Activated T-helper 1 cell treated with anti-CD3 and anti-CD28 coated beads, Interleukin-12 subunit alpha, Interleukin-12 subunit beta, Interleukin-2, Interleukin-4 antibody, amounts not matched to agents 30 ng/mL and 10 ng/mL and 1 ng/mL, durations not matched to agents 14 hours and 24 hours and 36 hours (primary cell): ENCODE measurements at regions of chr1 and their contacts with region 1.

Region 1: DNA sequence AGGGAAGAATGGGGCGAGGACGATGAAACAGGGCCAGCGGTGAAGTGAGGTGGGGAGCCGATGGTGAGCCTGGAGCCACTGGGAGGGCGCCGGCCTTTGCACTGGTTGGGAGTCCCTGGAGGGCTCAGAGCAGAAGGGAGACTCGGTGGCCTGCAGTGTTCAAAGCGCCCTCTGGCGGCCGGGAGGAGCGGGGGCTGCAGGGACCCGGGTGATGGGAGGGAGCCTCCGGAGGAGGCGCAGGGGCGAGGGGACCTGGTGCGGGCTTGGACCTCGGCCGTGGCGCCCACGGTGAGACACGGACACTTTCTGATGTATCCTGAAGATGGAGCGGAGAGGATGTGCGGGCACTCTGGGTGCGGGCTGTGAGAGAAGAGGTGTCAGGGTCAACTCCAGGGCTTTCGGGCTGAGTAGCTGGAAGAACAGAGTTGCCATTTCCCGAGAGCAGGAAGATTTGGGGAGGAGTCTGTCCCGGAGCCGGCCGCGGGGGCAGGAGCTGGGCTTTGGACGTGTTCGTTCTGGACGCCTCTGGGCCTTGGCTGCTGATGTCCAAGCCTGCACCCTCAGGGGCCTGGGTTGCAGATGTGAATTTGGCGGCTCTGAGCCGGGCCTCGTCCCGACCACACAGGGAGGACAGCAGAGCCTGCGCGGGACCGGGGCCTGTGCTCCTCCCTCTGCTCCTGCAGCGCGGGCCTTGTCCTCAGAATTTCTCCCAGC is 29.7 kb downstream of the HEYL start:
- DNase-seq: peak; percentile 67
- H3K4me3 Mint-ChIP-seq: no peak overlapping the region
- H3K27ac Mint-ChIP-seq: no peak overlapping the region
- H3K4me1 Mint-ChIP-seq: peaks cover 10% of the 10 kb centered on the region
- H3K27me3 Mint-ChIP-seq: no peaks in the 10 kb centered on the region

Region 2: GRCh38 chr1:39575191-39576015 is 34.4 kb before region 1 on chr1:
- intact Hi-C with region 1: loop called (anchors 1 kb)
- DNase-seq: peak; percentile 33
- H3K4me3 Mint-ChIP-seq: peak overlapping the region; percentile 93
- H3K27ac Mint-ChIP-seq: peak overlapping the region; percentile 85
- H3K4me1 Mint-ChIP-seq: peaks cover 49% of the 10 kb centered on the region
- H3K27me3 Mint-ChIP-seq: no peaks in the 10 kb centered on the region

Region 3: DNA sequence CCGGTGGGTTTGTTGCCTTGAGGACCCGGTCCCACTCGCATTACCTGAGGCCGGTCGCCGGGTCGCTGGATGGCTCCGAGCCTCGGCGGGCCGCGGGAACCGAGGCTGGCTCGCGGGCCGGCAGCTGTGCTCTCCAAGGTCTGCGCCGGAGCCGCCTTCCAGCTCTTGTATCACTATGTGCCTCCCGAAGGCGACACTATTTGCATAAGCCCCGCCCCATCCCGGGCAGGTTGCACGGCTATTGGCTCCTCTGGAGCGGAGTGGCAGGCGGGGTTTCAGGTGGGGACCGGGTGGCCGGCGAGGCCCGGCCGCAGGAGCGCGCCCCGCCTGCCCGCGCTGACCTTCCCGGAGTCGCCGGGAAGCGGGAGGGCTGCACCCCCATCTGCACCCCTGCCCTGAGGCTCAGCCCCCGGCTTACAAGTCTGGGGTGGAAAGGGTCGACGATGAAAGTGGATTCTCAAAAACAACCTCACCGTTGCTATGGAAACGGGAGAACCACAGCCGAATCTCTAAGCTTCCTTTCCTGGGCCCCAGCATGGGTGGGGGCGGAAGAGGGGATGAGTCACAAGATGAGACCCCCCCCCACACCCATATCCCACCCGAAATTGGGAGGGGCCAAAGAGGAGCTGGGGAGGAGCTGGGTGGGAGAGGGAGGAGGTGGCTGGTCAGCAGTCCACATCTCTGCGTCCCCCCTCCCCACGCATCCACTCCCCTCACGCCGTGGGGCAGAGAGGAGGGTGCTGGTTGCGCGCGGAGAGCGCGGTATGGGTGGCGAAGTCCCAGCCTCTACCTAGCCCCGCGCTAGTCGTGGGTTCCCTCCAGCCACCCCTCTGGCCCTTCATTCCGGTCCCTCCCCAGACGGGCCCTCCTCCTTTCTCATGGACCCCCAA is 81.7 kb after region 1 on chr1 and contains the start of gene HPCAL4:
- intact Hi-C with region 1: loop called (anchors 1 kb)
- DNase-seq: peak; percentile 88
- H3K4me3 Mint-ChIP-seq: peak within 1 kb of the TSS; percentile 83
- H3K27ac Mint-ChIP-seq: no peak within 1 kb of the TSS
- H3K4me1 Mint-ChIP-seq: peaks cover 44% of the 10 kb centered on the region
- H3K27me3 Mint-ChIP-seq: peaks cover 33% of the 10 kb centered on the region
- total RNA-seq, gene HPCAL4: 0.69 and 0.75 TPM in 2 replicates

Region 4: DNA sequence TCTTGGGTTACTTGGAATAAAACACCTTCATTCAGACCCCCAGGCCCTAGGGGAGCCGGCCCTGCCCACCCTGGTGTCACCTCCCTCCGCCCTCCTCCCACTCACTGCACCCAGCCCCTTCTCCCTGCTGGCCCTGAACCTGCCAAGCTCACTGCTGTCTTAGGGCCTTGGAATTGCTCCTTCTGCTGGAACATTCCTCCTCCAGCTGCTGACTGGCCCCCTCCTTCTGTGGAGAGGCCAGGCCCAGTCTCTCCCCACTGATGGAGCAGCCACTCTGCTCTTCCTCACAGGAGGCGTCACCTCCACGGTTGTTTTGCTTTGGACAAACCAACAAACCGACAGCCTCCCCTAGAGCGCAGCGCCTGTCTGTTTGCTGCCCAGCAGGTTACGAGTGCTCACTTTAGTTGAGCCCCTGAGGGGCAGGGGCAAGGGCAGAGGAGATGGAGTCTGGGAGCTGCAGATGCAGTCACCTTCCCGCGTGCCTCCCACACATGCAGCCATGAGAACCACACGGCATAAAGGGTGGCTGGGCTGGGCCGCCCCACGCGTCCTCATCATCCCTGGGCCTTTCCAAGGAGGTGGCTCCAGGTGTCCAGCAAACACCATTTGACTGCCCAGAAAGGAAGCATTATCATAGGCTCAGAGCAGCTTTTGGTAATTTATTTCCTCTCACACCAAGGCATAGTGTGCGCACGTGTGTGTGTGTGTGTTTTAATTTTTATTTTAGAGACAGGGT is 151.9 kb after region 1 on chr1:
- intact Hi-C with region 1: no loop called
- DNase-seq: no peak
- H3K4me3 Mint-ChIP-seq: no peak overlapping the region
- H3K27ac Mint-ChIP-seq: no peak overlapping the region
- H3K4me1 Mint-ChIP-seq: no peaks in the 10 kb centered on the region
- H3K27me3 Mint-ChIP-seq: no peaks in the 10 kb centered on the region

Region 5: DNA sequence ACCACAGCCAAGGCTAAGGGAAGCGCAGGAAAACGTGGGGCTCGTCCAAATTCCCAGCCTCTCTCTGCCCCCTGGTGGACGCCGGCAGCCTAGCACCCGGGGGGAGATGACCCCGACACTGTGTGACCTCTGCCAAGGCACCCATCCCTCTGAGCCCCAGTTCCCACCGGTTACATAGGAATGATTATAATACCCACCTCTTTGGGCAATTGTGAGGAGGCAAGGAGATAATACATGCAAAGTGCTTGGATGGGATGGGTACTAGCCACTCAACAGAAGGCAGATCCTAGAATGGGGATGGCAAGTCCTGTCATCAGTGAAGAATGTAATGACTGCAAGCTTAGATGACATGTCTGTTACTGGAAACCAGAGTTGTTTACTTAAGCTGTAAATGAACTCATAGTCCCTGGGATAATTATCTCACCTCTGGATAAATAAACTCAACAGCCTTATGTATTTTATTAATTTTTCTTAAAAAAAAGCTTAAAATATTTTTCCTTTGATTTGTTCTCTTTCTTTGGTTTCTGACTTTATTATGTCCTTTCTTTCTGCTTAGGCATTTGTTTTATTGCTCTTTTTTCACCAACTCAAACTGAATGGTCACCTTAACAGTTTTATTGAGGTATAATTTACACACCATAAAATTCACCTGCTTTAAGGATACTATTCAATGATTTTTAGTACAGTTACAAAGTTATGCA is 190.1 kb after region 1 on chr1:
- intact Hi-C with region 1: loop called (anchors 1 kb)
- DNase-seq: peak; percentile 41
- H3K4me3 Mint-ChIP-seq: peak overlapping the region; percentile 60
- H3K27ac Mint-ChIP-seq: peak overlapping the region; percentile 80
- H3K4me1 Mint-ChIP-seq: peaks cover 12% of the 10 kb centered on the region
- H3K27me3 Mint-ChIP-seq: peaks cover 4% of the 10 kb centered on the region

Region 6: GRCh38 chr1:40373338-40374283 is 763.8 kb after region 1 on chr1 and contains the start of gene SMAP2:
- intact Hi-C with region 1: no loop called
- DNase-seq: peak; percentile 95
- H3K4me3 Mint-ChIP-seq: peak within 1 kb of the TSS; percentile 97
- H3K27ac Mint-ChIP-seq: peak within 1 kb of the TSS; percentile 99
- H3K4me1 Mint-ChIP-seq: peaks cover 59% of the 10 kb centered on the region
- H3K27me3 Mint-ChIP-seq: peaks cover 3% of the 10 kb centered on the region
- total RNA-seq, gene SMAP2: 196 and 201 TPM in 2 replicates